ENCODE measurements at regions of chr2 and their contacts with region 1.

Region 1: DNA sequence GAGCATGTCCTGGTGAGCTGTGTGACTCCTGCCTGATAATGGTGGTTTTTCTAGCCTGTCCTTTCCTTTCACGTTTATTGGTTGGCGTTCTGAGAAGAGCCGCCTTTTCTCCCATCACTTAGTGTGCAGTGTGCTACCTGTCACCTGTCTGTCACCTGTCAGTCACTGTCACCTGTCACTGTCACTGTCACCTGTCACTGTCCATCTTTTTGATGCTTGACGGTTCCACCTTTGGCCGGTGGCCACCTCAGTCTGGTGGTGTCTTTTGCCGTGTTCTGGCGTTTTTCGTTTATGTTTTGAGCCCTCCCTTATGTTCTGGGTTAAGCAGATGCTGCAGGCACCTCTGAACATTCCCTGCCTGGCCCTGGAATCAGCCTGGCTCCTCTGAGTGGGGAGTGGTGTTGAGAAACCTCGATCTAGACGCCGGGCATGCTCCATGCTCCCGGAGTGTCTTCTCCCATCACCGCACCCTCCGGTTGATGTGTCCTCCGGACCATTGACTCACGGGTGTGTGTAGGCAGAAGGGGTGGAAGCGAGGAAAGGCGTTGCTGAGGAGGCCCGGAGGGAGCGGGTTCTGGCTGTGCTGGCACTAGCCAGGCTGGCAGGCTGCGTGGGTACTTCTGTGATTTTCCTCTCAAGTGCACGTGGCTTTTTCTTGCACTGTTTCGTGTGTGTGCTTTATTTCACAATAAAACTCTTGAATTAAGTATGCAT is 20.7 kb downstream of the DTYMK start:
- DNase-seq: no peak
- H3K4me3 ChIP-seq: no peak overlapping the region
- H3K27ac ChIP-seq: no peak overlapping the region
- H3K4me1 ChIP-seq: no peaks in the 10 kb centered on the region
- H3K27me3 ChIP-seq: no peaks in the 10 kb centered on the region
- CTCF ChIP-seq: no peak

Region 2: DNA sequence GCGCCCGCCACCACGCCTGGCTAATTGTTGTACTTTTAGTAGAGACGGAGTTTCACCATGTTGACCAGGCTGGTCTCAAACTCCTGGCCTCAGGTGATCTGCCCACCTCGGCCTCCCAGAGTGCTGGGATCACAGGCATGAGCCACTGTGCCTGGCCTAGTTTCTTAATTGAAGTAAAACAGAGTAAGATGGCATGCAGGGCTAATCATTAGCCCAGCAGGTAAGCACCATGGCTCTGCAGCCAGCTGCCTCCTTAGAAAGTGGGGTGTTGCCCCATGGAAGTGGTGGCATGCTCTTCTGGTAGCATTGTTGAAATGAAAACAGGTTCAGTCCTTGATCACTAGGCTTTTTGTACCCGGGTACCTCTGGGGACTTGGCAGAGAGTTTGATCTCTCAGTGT is 16.0 kb before region 1 on chr2:
- CTCF ChIA-PET with region 1: interaction called, 11 read pairs
- POLR2A ChIA-PET with region 1: no interaction called
- intact Hi-C with region 1: no loop called
- DNase-seq: no peak
- H3K4me3 ChIP-seq: no peak overlapping the region
- H3K27ac ChIP-seq: no peak overlapping the region
- H3K4me1 ChIP-seq: no peaks in the 10 kb centered on the region
- H3K27me3 ChIP-seq: no peaks in the 10 kb centered on the region
- CTCF ChIP-seq: no peak